Ascending aorta (tissue), 2 donors: ENCODE measurements at regions of chr10 and their contacts with region 1.

Region 1: DNA sequence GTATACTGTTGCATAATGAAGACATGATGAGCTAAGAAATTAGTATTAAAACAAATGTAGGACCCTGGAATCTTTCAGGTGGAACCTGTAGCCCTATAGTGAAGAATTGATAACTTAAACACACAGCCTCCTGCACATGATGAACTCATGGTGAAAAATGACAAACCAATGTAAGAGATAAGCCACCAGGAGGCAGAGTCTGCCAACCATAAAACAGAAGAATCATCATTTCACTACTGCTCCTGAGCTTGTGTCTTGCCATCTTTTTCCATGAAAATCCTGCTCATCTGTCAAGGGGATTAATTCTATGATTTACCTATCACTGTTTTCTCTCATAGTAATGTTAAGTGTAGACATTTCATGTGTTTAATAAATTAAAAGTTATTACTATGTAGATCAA is 363.9 kb downstream of the MALRD1 start:
- DNase-seq: no peak
- H3K4me3 ChIP-seq: no peak overlapping the region
- H3K27ac ChIP-seq: no peak overlapping the region
- H3K4me1 ChIP-seq: no peaks in the 10 kb centered on the region
- H3K27me3 ChIP-seq: no peaks in the 10 kb centered on the region
- CTCF ChIP-seq: peak in 2 of 3 experiments; percentile 52 to 64

Region 2: DNA sequence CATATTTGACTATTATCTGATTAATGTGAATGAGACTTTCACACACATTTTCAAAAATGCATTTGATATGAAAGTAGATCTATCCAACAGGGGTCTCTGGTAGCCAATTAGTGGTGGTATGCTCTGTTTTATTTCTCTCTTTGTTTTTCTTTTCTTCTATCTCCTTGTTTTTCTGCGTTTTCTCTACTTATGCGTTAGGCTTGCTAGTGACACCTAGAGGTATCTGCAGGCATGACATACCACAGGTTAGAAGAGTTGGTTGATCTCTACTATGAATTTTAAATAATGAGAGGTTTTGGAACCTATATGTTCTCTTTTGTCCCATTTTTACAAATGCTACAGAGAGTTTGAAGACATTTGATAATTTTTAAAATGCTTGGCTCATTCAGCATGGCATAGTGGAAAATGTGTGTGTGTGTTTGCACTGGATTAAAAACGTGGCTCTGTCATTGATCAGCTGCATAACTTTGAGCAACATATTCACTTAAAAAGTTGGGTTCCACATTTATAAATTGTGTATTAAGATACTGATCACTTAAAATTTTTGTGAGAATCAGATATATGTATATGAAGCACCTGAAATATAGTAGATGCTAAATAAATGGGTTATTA is 375.6 kb after region 1 on chr10:
- intact Hi-C with region 1: loop called (anchors 2 kb)
- DNase-seq: no peak
- H3K4me3 ChIP-seq: no peak overlapping the region
- H3K27ac ChIP-seq: no peak overlapping the region
- H3K4me1 ChIP-seq: no peaks in the 10 kb centered on the region
- H3K27me3 ChIP-seq: no peaks in the 10 kb centered on the region
- CTCF ChIP-seq: peak; percentile 46 to 80 (median 79)

Region 3: DNA sequence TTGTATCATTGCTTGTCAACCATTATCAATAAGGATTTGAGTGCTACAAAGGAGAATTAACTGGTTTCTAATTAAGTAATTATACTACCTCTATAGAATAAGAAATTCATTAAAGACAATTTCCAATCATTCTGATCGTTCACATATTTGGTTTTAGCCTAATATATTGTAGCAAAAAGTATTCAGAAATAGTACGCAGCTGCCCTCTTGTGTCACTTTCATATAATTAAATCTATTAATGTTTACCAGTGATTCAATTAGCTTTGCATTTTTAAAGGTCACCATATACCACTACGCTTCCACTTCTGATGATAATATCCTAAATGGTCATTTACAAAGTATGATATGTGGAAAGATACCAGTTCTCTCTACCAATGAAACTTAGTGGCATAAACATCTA is 1356.3 kb after region 1 on chr10:
- intact Hi-C with region 1: loop called (anchors 2 kb)
- DNase-seq: no peak
- H3K4me3 ChIP-seq: no peak overlapping the region
- H3K27ac ChIP-seq: no peak overlapping the region
- H3K4me1 ChIP-seq: peaks cover 0 to 14% of the 10 kb centered on the region in 2 donors
- H3K27me3 ChIP-seq: no peaks in the 10 kb centered on the region
- CTCF ChIP-seq: peak; percentile 33 to 73 (median 33)

Region 4: GRCh38 chr10:20855398-20856038 is 1443.0 kb after region 1 on chr10:
- intact Hi-C with region 1: loop called (anchors 2 kb)
- DNase-seq: no peak
- H3K4me3 ChIP-seq: no peak overlapping the region
- H3K27ac ChIP-seq: no peak overlapping the region
- H3K4me1 ChIP-seq: no peaks in the 10 kb centered on the region
- H3K27me3 ChIP-seq: no peaks in the 10 kb centered on the region
- CTCF ChIP-seq: peak; percentile 22 to 62 (median 36)